ENCODE measurements at regions of chr1 and their contacts with region 1.

Region 1: DNA sequence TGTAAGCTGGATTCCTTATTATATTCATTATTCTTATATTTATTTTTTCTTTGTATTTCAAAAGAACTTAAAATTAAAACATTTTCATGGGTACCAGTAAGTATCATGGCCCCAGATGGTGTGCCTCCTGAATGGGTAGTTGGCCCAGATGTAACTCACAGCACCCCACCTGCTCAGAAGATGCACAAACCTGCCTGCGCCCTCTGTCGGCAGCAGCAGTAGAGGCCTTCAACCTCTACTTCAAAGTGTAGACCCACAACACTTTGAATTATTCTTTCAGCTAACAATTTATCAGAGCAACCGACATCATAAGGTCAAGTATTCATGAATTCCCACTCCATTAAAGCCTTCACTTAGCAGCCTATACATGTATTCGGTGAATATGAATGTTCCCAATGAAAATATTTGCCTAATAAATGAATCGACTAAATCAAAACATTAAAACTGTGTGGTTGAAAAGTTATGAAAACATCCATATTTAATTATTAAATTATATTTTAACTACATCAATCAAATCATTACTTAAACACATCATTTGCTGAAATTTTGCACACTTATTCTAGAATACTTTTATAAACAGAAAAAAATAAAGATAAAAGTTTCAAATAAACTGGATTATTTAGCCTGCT is 25.4 kb downstream of the PIGM start:
- DNase-seq: peak; percentile 88

Region 2: DNA sequence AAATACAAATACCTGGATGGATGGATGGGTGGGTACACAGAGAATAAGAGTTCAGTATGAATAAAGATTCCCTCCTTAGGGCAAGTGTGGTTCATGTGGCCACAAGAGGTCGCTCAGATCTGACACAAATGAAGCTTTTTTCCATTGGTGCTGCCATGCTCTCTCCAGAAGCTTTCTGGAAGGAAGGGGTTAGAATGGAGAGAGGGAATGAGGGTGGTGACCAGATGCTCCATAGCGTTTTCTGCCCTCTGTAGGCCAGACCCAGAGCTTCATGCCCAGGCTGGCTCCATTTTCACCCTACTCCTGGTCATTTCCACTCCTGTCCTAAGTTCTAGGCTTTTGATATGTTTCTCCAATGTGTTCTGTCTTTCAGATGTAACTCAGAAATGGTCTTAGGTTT is 207.5 kb before region 1 on chr1:
- intact Hi-C with region 1: loop called (anchors 10 kb)
- DNase-seq: no peak

Region 3: GRCh38 chr1:159936273-159936904 is 70.0 kb before region 1 on chr1:
- intact Hi-C with region 1: loop called (anchors 5 kb)
- DNase-seq: peak; percentile 94

Region 4: DNA sequence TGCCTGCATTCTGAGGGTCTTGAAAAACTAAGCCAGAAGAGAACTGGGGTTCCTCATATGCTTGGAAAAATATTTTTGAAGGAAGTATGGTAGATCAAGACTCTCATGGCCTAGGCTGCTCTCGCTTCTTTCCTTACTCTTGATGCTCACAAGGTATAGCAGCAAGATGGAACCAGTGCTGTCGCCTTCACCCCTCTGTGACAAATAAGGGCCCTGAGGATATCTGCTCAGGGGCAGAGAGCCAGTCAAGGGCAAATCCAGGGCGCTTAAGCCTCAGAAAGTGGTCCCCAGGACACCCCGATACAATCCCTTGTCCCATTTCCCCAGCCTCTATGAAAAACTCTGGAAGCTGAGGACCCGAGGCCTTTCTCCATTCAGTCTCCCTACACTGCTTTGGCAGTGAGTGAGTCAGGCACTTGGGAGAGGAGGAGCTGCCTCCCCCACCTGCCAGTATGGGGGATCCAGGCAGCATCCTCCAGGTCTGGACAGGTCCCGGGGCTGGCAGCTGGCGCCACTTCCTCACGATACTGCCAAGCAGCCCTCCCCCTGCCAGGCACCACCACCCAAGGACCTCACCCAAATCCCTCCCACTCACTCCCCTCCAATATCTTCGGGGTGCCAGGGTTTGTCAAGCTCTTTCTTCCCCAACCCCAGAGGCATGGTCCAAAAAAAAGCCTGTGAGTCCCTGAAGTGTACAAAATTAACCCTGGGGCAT is 62.4 kb before region 1 on chr1:
- intact Hi-C with region 1: loop called (anchors 5 kb)
- DNase-seq: no peak

Region 5: GRCh38 chr1:160058087-160058486 is 51.7 kb after region 1 on chr1:
- intact Hi-C with region 1: no loop called
- DNase-seq: no peak

Measured in posterior vena cava (tissue), 2 donors.